ENCODE measurements at regions of chr19 and their contacts with region 1.

Region 1: GRCh38 chr19:45059278-45059965 is 16.9 kb downstream of the ZNF296 start:
- DNase-seq: no peak
- H3K4me3 ChIP-seq: no peak overlapping the region
- H3K27me3 ChIP-seq: no peaks in the 10 kb centered on the region
- CTCF ChIP-seq: peak; percentile 86

Region 2: DNA sequence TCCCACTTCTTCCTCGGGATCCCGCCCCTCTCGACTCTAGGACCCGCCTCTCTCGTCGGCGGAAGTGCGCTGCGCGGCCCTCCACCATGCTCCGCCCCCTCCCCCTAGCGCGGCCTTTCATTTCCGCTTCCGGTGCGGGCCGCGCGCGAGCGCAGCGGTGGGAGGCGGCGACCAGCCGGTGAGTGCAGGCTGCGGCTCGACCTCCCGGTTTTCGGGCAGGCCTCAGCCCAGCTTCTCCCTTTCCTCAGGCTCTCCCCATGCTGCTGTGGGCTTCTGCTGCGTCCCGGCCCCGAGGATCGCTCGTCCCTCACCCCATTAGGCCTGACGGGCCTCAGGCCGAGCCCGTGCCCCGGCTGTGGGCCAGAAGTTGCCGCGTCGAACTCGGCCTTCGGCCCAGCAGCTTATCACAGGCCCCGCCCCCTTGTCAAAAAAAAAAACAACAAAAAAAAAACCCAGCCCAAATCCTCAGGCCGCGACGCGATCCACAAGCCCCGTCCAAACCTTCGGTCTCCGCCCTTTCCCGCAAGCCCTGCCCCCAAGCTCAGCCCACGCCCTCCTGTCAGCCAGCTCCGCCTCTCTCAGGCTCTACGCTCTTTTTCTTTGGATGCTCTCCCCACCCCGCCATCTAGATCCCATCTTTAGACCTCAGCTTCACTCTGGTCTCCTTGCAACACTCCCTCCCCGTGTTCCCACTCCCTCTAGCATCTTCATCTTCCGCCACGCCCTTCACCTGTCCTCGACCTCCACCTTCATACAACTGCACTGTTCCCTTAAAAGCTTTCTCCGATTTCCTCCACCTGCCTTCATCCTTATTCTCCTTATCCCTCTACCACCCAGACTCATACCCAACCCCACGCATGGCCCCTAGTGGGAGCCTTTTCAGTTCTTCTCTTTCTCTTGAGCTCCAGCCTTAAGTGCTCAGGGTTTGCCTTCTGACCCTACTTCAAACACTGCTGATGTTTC is 20.2 kb before region 1 on chr19 and contains the start of gene CLASRP:
- CTCF ChIA-PET with region 1: interaction called, 28 read pairs
- POLR2A ChIA-PET with region 1: no interaction called
- DNase-seq: peak; percentile 31
- H3K4me3 ChIP-seq: peak within 1 kb of the TSS; percentile 87
- H3K27me3 ChIP-seq: no peaks in the 10 kb centered on the region
- CTCF ChIP-seq: no peak
- polyA plus RNA-seq, gene CLASRP: 13.6 and 15.9 TPM in 2 replicates

Region 3: GRCh38 chr19:45047188-45047797 is 12.1 kb before region 1 on chr19:
- CTCF ChIA-PET with region 1: interaction called, 28 read pairs
- POLR2A ChIA-PET with region 1: no interaction called
- DNase-seq: no peak
- H3K4me3 ChIP-seq: no peak overlapping the region
- H3K27me3 ChIP-seq: no peaks in the 10 kb centered on the region
- CTCF ChIP-seq: no peak

Region 4: GRCh38 chr19:45075301-45076028 is 16.0 kb after region 1 on chr19:
- CTCF ChIA-PET with region 1: interaction called, 19 read pairs
- POLR2A ChIA-PET with region 1: no interaction called
- DNase-seq: no peak
- H3K4me3 ChIP-seq: peak overlapping the region; percentile 50
- H3K27me3 ChIP-seq: no peaks in the 10 kb centered on the region
- CTCF ChIP-seq: no peak

Region 5: GRCh38 chr19:45104658-45105349 is 45.4 kb after region 1 on chr19:
- CTCF ChIA-PET with region 1: no interaction called
- POLR2A ChIA-PET with region 1: no interaction called
- DNase-seq: no peak
- H3K4me3 ChIP-seq: no peak overlapping the region
- H3K27me3 ChIP-seq: no peaks in the 10 kb centered on the region
- CTCF ChIP-seq: no peak

Region 6: GRCh38 chr19:45117669-45118068 is 58.2 kb after region 1 on chr19:
- CTCF ChIA-PET with region 1: no interaction called
- POLR2A ChIA-PET with region 1: no interaction called
- DNase-seq: no peak
- H3K4me3 ChIP-seq: no peak overlapping the region
- H3K27me3 ChIP-seq: no peaks in the 10 kb centered on the region
- CTCF ChIP-seq: no peak

Region 7: GRCh38 chr19:45179072-45179891 is 119.9 kb after region 1 on chr19:
- CTCF ChIA-PET with region 1: no interaction called
- POLR2A ChIA-PET with region 1: no interaction called
- DNase-seq: no peak
- H3K4me3 ChIP-seq: peak overlapping the region; percentile 78
- H3K27me3 ChIP-seq: no peaks in the 10 kb centered on the region
- CTCF ChIP-seq: no peak

Measured in BJ (cell line).